Right ventricle myocardium superior (tissue), 1 donor: ENCODE measurements at regions of chr10 and their contacts with region 1.

Region 1: DNA sequence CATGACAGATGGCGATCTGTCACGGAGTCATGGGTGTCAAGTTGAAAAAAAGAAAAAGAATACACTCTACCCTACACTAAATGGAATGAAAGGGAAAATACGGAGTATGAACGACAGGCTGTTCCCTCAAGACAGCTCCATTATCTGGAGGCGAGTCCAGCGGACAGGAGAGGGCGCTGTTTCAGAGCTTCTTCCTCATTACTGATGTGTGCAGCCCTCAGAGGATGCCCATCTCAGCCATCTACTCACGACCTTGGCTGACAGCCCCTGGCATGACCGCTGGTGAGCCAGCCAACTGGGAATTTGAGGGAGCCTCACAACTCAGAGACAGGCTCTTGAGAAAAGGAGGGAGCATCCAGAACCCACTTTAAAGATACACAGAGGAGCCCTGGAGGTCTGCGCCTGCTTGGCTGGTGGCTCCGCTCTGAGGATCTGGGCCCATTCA is 49.6 kb upstream of the SMNDC1 start:
- DNase-seq: peak; percentile 83
- ATAC-seq: peak; percentile 89

Region 2: GRCh38 chr10:110168601-110169481 is 185.5 kb before region 1 on chr10:
- intact Hi-C with region 1: no loop called
- DNase-seq: no peak
- ATAC-seq: peak; percentile 68

Region 3: GRCh38 chr10:110497438-110498086 is 143.2 kb after region 1 on chr10 and contains the start of gene DUSP5:
- intact Hi-C with region 1: loop called (anchors 2 kb)
- DNase-seq: peak; percentile 97
- ATAC-seq: peak; percentile 91
- total RNA-seq, gene DUSP5: 6.8 TPM

Region 4: GRCh38 chr10:110525349-110526260 is 171.3 kb after region 1 on chr10:
- intact Hi-C with region 1: no loop called
- DNase-seq: no peak
- ATAC-seq: no peak

Region 5: DNA sequence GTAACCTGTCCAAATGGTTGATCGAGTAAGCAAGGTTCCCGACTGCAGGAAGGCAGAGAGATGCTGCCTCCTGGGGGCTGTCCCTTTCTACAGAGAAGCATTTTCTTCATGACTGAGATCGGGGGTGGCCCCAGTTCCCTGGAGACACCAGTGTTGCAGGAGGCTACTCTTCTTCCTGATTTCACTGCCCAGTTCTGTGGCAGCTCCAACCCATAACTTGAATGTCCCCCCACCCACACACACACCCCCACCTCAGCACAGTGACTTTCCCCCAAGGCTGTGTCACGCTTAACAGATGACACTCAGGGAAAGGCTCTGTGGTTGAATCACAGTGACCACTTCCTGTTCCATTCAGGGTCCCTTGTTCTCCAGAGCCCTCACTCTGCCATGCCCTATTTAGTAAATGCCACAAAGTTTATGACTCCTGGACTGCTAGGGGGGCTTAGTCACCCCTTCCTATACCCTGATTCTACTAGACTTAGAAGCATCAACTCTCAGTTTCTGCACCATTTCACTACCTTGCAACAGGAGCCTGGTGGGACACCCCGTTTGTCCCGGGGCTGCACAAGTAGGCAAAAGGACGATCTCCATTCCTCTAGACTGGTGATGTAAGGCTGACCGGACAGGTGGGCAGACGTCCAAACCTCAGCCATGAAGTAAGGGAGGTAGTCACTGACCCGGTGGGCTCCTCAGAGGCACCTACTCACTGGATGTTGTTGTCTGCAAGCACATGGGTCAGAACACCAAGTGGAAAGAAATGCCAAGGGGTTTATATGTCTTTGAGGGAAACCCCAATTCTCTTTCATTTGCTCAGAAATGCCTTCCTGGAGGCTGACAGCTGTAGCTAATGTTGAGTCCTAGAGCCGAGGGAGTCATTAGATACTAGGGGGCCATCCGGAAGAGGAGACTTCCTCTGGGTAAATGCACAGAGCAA is 181.9 kb after region 1 on chr10:
- intact Hi-C with region 1: loop called (anchors 2 kb)
- DNase-seq: no peak
- ATAC-seq: peak; percentile 82